ENCODE measurements at regions of chr9 and their contacts with region 1.

Region 1: DNA sequence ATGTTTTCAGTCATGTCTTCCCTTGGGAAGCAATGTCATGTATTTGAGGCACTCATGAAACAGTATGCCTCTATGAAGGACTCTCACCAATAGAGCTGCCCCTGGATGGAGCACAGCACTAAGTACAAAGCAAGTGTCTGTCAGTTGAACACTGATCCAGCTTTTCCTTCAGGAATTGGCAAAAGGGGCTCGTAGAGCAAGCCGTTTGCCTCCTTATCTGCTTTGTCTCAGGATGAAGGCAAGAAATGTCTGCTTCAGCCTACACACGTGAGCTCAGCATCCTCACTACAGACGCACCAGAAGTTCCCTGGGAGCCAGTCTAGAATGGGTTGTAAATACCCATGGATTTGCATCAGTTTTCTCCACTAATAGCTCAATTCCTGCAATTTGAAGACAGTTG is 743.0 kb upstream of the DMAC1 start:
- DNase-seq: no peak
- ATAC-seq: no peak
- H3K4me3 ChIP-seq: no peak overlapping the region
- H3K27ac ChIP-seq: no peak overlapping the region
- H3K4me1 ChIP-seq: no peaks in the 10 kb centered on the region
- H3K27me3 ChIP-seq: no peaks in the 10 kb centered on the region
- CTCF ChIP-seq: no peak

Region 2: GRCh38 chr9:8282535-8282934 is 260.0 kb before region 1 on chr9:
- intact Hi-C with region 1: no loop called
- DNase-seq: no peak
- ATAC-seq: no peak
- H3K4me3 ChIP-seq: no peak overlapping the region
- H3K27ac ChIP-seq: no peak overlapping the region
- H3K4me1 ChIP-seq: no peaks in the 10 kb centered on the region
- H3K27me3 ChIP-seq: no peaks in the 10 kb centered on the region
- CTCF ChIP-seq: no peak

Region 3: DNA sequence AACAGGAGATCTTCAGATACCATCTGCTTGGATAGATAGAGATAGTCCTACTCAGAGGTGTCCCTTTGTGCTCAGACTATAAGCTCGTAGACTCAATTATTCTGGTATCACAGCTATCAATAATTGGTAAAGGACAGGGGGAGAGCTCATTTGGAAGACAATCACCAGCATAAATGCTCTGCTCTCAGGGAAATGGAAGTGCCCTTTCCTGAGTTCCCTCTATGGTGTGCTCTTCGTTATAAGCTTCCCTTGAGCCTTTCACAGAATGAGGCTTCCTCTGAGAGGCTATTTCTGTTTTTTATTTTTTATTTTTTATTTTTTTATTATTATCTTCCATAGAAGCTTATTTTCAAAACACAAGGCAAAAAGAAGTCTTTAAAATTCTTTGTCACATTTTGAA is 412.8 kb after region 1 on chr9:
- intact Hi-C with region 1: loop called in 1 of 2 experiments (anchors 5 kb)
- DNase-seq: no peak
- ATAC-seq: no peak
- H3K4me3 ChIP-seq: no peak overlapping the region
- H3K27ac ChIP-seq: no peak overlapping the region
- H3K4me1 ChIP-seq: no peaks in the 10 kb centered on the region
- H3K27me3 ChIP-seq: no peaks in the 10 kb centered on the region
- CTCF ChIP-seq: no peak